ENCODE measurements at regions of chrX and their contacts with region 1.

Region 1: GRCh38 chrX:48937054-48937907 is 18.5 kb upstream of the PIM2 start:
- DNase-seq: peak; percentile 93
- ATAC-seq: peak; percentile 78
- H3K4me3 Mint-ChIP-seq: peak overlapping the region; percentile 75
- H3K27ac Mint-ChIP-seq: peak overlapping the region; percentile 88
- H3K4me1 Mint-ChIP-seq: peaks cover 81% of the 10 kb centered on the region
- H3K27me3 Mint-ChIP-seq: no peaks in the 10 kb centered on the region

Region 2: DNA sequence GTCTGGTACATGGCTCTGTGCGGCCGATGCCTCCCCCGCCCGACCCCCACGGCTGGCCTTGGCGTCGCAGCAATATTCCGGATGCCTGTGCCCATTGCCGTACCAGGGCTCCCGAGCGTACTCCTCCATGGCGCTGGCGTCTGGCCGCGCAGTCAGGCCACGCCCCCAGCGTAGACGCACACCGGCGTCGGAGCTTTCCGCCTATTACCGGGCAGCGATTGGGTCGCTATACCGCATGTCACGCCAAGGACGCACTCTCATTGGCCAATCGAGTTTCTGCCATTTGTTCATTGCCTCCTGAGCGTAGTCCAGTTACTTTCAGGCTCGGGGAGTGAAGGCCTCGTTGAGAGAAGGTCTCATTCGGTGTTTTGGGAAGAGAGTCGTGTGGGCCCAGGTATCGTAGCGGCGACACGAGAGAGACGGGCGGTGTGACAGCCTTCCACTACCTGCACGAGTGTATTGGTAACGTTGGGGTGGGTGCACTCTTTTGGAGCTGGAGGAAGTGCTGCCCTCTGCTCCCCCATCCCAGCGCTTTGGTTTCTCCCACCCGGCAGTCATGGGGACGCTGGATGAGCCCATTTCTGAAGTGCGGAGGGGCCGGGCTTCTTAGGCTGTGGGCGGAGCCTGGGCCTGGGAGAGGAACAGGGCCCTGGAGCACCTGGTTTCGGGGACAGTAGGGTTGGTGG is 39.5 kb before region 1 on chrX and contains the starts of genes PQBP1 and TIMM17B:
- CTCF ChIA-PET with region 1: interaction called, 3 read pairs
- POLR2A ChIA-PET with region 1: interaction called, 14 read pairs
- DNase-seq: peak; percentile 92
- ATAC-seq: peak; percentile 95
- H3K4me3 Mint-ChIP-seq: peak within 1 kb of the TSS; percentile 80
- H3K27ac Mint-ChIP-seq: peak within 1 kb of the TSS; percentile 99
- H3K4me1 Mint-ChIP-seq: peaks cover 17% of the 10 kb centered on the region
- H3K27me3 Mint-ChIP-seq: no peaks in the 10 kb centered on the region
- total RNA-seq, gene PQBP1: 63.9 to 70.8 TPM
- total RNA-seq, gene TIMM17B: 41.6 to 44.1 TPM

Region 3: DNA sequence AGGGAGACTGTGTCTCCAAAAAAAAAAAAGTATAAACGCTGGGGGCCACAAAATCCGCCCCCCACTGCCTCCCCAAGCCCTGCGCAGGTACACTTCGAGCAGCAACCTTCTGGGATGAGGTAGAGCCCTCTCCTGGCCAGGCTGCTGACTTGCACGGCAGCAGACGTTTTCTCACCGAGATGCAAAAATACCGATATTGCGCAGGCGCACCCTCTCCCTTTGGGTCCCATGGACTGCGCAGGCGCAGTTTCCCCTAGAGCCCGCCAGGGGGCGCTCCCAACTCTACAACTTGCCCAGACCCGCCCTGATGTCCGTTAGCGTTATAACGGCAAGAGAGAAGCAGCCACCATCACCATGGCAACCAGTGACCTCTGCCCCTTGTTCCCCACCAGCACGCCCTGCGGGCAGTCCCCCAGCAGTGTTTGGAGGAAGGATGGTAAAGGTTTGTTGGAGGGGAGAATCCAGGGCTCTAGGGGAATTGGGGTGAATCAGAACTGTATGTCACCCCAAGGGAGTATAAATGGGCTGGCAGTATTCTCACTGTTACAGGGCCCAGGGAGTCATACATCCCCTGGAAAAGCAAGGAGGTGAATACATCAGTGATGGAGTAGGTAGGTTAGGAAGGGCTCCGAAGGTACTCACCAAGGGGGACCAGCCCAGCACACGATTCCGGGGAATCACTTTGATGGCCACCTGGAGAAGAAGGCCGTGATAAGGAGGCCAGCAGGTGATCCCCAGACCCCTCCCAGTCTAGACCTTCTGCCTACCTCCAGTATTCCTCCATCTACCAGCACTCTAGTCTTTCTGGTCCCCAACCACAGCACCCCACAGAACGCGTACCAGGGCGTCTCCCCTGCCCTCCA is 19.9 kb before region 1 on chrX:
- CTCF ChIA-PET with region 1: interaction called, 23 read pairs
- POLR2A ChIA-PET with region 1: interaction called, 126 read pairs
- DNase-seq: peak; percentile 92
- ATAC-seq: peak; percentile 48
- H3K4me3 Mint-ChIP-seq: peak overlapping the region; percentile 90
- H3K27ac Mint-ChIP-seq: peak overlapping the region; percentile 89
- H3K4me1 Mint-ChIP-seq: peaks cover 66% of the 10 kb centered on the region
- H3K27me3 Mint-ChIP-seq: no peaks in the 10 kb centered on the region

Region 4: DNA sequence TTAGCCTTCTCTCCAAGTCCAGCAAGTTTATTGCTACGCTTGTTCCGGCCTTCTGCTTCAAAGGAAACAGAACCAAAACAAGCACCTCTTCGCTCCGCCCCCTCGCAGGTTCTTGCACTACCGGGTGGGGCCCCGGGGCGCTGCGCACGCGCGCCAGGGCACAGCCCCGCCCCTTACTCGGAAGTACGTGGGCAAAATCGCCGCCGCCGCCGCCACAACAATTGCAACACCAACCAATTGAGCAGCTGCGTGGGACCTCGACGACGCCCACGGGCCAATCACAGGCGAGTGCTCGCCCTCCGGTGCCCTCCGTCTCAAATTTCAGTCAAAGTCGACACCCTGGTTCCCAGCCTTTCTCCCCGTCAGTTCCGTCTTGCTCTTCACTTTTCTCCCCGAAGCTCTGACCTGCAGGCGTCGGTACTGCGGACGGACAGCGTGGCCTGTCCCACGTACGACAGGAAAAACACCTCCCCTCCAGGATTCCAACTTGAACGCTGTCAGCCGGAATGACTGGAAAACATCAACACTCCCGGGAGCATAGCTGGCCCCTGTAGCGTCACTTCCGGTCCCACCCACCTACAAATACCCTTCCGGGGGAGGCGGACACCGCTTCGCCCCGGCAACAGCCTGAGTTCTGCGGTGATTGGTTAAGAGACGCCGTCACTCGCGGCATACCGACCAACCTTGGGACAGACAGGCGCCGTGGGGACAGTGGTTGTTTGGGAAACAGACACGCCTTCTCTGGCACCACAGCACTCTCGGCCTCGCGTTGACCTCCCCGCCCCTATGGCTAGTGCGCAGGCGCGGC is 20.8 kb after region 1 on chrX:
- CTCF ChIA-PET with region 1: interaction called, 3 read pairs
- POLR2A ChIA-PET with region 1: interaction called, 11 read pairs
- DNase-seq: peak; percentile 95
- ATAC-seq: peak; percentile 88
- H3K4me3 Mint-ChIP-seq: peak overlapping the region; percentile 99
- H3K27ac Mint-ChIP-seq: peak overlapping the region; percentile 100
- H3K4me1 Mint-ChIP-seq: peaks cover 35% of the 10 kb centered on the region
- H3K27me3 Mint-ChIP-seq: no peaks in the 10 kb centered on the region

Measured in activated CD8-positive, alpha-beta T cell treated with anti-CD3 and anti-CD28 coated beads, Interleukin-2, amount 10 ng/mL, durations not matched to agents 7 days and 5 days (primary cell).